Breast epithelium (tissue), 4 donors: ENCODE measurements at regions of chr12 and their contacts with region 1.

Region 1: DNA sequence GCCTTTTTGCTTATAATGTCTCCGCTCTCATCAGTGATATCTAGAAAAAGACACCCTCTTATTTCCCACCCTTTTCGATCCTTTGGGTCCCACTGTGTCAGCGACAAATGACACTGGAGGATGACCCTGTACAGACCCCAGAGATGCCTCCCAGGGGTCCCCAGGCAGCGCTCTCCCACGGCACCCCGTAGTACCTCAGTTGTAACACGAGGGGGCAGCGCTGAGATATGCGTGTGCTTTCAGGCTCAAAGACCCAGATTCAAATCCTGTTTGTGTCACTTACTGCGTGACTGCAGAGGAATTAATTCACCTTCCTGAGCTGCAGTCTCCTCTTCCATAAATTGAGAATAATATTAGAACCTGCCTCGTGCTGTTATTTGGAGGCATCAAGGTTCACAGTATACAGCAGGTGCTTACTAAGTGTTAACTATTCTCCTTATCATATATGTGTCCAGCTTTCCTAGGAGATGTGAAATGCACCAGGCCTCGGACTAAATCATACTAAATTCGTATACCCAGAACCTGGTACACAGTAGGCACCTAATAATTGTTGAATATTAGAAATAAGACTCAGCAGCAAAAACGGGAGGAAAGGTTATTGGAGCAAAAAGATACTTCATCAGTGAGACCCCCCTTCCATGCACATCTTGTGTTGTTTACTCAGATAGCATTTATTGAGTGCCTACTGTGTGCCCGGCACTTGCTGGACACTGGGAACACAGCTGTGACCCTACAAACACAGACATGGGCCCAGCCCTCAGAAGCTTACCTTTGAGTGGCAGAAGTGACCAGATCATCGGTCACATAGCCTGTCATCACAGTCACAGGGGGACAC is 99.9 kb downstream of the PHETA1 start:
- DNase-seq: no peak
- H3K4me3 ChIP-seq: no peak overlapping the region
- H3K27ac ChIP-seq: no peak overlapping the region
- H3K4me1 ChIP-seq: no peaks in the 10 kb centered on the region
- H3K27me3 ChIP-seq: peaks cover 0 to 40% of the 10 kb centered on the region in 2 donors
- CTCF ChIP-seq: no peak
- POLR2A ChIP-seq: no peak

Region 2: DNA sequence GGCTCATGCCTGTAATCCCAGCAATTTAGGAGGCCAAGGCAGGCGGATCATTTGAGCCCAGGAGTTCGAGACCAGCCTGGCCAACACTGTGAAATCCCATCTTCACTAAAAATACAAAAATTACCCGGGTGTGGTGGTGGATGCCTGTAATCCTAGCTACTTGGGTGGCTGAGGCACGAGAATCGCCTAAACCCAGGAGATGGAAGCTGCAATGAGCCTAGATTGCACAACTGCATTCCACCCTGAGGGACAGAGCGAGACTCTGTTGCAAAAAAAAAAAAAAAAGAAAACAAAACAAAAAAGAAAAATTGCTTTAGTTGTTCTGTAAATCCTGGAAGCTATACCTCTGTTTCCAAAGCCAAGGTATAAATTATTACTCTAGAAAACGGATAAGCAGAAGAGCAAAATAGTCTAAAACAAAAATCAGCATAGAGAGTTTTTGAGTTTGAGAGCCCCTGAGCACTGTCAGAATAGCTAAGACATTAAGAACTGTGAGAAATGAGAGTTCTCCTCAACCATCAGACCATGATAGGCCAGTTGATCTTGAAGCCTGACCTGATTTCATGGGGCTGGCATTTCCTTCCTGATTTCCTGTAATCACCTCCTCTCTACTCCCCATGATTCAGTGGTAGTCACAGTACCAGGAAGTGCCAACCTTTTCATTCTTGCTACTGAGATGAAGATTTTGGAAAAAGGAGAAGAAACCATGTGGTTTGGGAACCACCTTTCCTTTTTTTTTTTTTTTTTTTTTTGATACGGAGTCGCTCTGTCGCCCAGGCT is 956.2 kb before region 1 on chr12:
- intact Hi-C with region 1: no loop called
- DNase-seq: no peak
- H3K4me3 ChIP-seq: no peak overlapping the region
- H3K27ac ChIP-seq: peak overlapping the region; percentile 49 to 57
- H3K4me1 ChIP-seq: peaks cover 0 to 7% of the 10 kb centered on the region in 2 donors
- H3K27me3 ChIP-seq: no peaks in the 10 kb centered on the region
- CTCF ChIP-seq: no peak
- POLR2A ChIP-seq: no peak

Region 3: DNA sequence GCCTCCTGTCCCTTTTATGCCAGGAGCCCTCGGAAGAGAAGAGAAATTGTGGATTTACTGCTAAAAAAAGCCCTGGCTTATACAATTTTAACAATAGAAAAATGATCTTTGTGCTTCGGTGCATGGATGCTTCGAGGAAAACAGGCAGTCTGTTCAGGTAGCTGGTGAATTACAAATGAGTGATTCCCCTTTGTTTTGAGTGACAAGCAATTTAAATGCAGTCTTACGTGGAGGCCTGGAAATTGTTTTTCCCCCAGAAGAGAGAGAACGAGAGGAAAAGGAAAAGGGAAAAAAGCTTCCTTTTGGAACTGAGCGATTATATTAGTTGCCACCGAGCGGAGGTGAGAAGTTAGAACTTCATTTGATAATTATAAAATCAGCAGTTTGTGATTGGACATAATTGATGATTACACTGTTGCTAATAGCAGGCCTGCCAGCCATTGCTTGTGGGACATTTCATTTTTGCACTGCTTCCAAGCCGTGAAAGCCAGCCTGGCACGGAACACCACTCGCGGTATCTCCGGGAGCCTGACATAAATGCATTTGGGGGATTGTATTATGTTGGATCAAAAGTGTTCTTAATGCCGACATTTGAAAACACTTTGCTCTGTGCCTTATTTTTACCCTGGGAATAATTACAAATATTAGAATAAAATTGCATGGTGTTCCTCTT is 17.8 kb before region 1 on chr12:
- intact Hi-C with region 1: loop called (anchors 1 kb)
- DNase-seq: no peak
- H3K4me3 ChIP-seq: no peak overlapping the region
- H3K27ac ChIP-seq: no peak overlapping the region
- H3K4me1 ChIP-seq: no peaks in the 10 kb centered on the region
- H3K27me3 ChIP-seq: peaks cover 0 to 31% of the 10 kb centered on the region in 2 donors
- CTCF ChIP-seq: no peak
- POLR2A ChIP-seq: no peak